MCF 10A (cell line): ENCODE measurements at regions of chr2 and their contacts with region 1.

Region 1: DNA sequence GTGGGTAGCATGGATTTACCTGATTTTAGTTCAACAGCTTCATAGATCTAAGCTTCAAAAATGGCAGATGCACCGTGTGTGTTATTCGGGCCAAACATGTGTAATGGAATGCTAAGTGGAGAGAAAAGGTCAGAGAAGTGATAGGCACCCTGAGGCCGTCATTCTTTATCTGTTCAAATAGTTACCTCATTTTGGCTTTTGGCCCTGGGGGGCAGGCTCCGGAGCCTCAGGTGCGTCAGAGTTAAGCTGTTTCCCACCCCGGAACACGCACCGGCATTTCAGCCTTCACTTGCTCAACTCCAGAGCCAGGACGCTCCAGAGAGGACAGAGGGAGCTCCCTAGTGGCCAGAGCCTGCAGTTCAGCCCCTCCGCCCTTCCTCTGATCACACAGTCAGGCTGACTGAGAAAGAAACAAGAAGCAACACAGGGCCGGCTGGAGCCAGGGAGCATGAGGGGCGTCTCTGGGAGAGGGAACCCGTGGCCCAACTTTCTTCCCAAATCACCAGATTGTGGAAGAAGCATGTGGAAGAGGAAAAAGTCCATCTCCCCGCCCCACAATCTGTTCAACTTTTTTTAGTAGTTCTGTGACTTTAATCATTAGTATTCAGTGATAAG is 135.2 kb upstream of the EPC2 start:
- DNase-seq: peak; percentile 88
- H3K4me3 Mint-ChIP-seq: peak overlapping the region; percentile 67
- H3K27ac Mint-ChIP-seq: peak overlapping the region; percentile 36
- H3K4me1 Mint-ChIP-seq: peaks cover 8% of the 10 kb centered on the region
- H3K27me3 Mint-ChIP-seq: no peaks in the 10 kb centered on the region
- CTCF ChIP-seq: peak; percentile 93

Region 2: DNA sequence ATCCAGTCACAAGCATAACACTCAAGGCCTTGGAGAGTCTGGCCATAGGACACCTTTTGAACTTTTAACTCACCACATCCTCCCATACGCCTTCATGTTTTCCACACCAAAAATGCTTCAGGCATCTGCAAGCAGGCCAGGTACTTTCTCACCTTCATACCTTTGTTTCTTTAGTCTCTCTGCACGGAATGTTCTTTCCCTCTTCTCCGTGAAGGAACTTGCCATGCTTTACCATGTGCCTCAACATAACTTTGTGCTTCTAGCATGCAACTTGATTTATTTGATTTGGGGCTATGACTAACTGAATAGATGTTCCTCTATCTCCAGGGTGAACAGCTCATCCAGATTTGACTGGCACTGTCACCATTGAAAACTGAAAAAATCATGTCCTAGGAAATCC is 806.2 kb before region 1 on chr2:
- CTCF ChIA-PET with region 1: no interaction called
- POLR2A ChIA-PET with region 1: no interaction called
- intact Hi-C with region 1: no loop called
- DNase-seq: no peak
- H3K4me3 Mint-ChIP-seq: no peak overlapping the region
- H3K27ac Mint-ChIP-seq: no peak overlapping the region
- H3K4me1 Mint-ChIP-seq: no peaks in the 10 kb centered on the region
- H3K27me3 Mint-ChIP-seq: no peaks in the 10 kb centered on the region
- CTCF ChIP-seq: no peak

Region 3: DNA sequence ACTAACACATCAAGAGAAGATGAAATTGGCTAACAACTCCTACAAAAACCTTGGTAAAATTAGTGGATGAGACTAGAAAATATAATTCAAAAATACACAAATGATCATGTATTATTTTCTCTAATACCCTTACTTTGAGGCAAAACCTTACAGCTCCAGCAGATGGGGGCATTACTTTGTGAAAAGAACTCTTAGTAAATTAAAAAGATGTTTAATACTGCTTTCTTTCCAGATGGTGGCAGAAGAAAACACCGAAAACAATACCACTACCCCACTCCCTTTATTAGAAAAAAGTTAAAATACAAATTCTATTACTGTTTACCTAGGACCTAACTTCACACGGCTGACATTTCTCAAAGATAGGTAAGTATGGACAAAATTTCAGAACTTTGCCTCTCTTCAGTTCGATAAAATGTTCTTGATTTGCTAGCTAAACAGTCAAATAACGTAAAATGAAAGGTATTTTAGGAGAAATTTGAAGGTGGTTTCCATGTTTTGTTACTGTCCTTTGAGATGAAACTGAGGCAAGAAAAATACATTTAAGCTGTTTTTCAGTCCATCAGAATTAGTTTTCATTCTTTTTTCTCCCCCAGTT is 519.5 kb before region 1 on chr2:
- CTCF ChIA-PET with region 1: interaction called, 19 read pairs
- POLR2A ChIA-PET with region 1: no interaction called
- intact Hi-C with region 1: loop called (anchors 1 kb)
- DNase-seq: peak; percentile 50
- H3K4me3 Mint-ChIP-seq: no peak overlapping the region
- H3K27ac Mint-ChIP-seq: no peak overlapping the region
- H3K4me1 Mint-ChIP-seq: no peaks in the 10 kb centered on the region
- H3K27me3 Mint-ChIP-seq: no peaks in the 10 kb centered on the region
- CTCF ChIP-seq: peak; percentile 72

Region 4: GRCh38 chr2:148209603-148210002 is 299.8 kb before region 1 on chr2:
- CTCF ChIA-PET with region 1: no interaction called
- POLR2A ChIA-PET with region 1: no interaction called
- intact Hi-C with region 1: loop called (anchors 10 kb)
- DNase-seq: no peak
- H3K4me3 Mint-ChIP-seq: no peak overlapping the region
- H3K27ac Mint-ChIP-seq: no peak overlapping the region
- H3K4me1 Mint-ChIP-seq: no peaks in the 10 kb centered on the region
- H3K27me3 Mint-ChIP-seq: no peaks in the 10 kb centered on the region
- CTCF ChIP-seq: no peak

Region 5: DNA sequence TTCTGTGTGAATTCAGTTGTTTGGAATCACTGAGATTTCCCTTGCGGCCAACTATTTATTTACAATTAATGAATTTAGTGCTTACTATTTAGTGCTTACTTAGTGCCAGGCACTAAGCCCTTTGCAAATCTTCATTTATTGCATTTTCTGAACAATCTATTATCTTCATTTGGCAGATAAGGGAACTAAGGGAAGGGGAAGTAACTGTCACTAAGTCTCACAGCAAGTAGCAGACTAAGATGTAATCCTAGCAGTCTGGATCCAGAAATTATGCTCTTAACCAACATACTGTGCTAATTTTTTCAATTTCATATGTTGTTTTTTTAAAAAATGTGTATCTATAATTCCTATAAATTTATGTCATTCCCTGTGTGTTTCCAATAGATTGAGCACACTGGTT is 79.3 kb before region 1 on chr2:
- CTCF ChIA-PET with region 1: no interaction called
- POLR2A ChIA-PET with region 1: no interaction called
- intact Hi-C with region 1: no loop called
- DNase-seq: no peak
- H3K4me3 Mint-ChIP-seq: no peak overlapping the region
- H3K27ac Mint-ChIP-seq: no peak overlapping the region
- H3K4me1 Mint-ChIP-seq: no peaks in the 10 kb centered on the region
- H3K27me3 Mint-ChIP-seq: no peaks in the 10 kb centered on the region
- CTCF ChIP-seq: no peak

Region 6: DNA sequence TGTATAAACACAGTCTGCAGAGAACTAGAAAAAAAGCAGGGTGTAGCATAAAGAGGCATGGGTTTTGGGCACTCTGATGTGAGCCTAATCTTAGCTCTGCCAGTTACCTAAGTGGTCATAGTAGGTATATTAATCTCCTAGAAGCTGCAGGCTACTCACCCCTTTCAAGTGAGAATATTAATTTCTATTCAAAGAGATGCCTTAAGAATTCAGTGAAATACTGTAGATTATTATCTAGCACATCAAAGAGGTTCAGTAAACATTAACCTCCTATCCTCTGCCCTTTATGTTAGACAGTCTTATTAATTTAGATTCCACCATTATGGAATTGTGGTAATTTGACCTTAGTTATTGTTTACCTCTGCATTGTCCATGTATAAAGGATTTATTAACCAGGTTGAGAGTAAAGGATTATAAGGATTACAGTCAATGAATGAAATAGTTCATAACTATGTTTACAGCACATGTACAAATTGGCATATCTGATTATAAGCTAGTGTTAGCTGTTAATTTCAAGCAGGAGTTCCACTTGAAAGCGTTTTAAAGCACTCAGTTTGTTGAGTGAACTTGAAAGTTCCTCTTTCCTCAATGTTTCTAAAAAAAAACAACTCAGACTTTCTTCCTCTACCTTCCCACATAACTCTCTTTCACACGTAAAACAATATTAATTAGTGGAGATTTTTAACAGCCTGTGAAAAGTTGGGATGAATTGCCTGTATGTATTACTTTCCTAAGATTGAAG is 15.4 kb before region 1 on chr2:
- CTCF ChIA-PET with region 1: interaction called, 11 read pairs
- POLR2A ChIA-PET with region 1: interaction called, 3 read pairs
- intact Hi-C with region 1: no loop called
- DNase-seq: no peak
- H3K4me3 Mint-ChIP-seq: no peak overlapping the region
- H3K27ac Mint-ChIP-seq: no peak overlapping the region
- H3K4me1 Mint-ChIP-seq: no peaks in the 10 kb centered on the region
- H3K27me3 Mint-ChIP-seq: no peaks in the 10 kb centered on the region
- CTCF ChIP-seq: no peak

Region 7: DNA sequence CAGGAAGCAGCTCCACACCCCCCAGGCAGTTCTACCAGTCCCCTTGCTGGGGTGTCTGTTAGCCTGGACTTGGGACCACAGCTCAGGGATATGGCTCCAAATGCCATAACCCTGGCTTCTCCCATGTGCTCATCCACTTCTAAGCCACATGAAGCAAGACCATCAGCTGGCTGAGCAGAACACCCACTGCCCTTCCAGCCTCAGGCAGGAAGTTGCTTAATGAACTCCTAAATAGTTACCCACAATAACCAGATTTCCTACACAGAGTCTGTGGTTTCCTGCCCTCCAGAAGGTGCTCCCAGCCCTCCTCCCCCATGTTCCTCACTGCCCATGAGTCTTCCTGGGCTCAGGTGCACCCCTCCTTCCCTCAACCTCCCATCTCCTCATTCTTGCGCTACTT is 36.9 kb after region 1 on chr2:
- CTCF ChIA-PET with region 1: no interaction called
- POLR2A ChIA-PET with region 1: no interaction called
- intact Hi-C with region 1: no loop called
- DNase-seq: peak; percentile 34
- H3K4me3 Mint-ChIP-seq: no peak overlapping the region
- H3K27ac Mint-ChIP-seq: no peak overlapping the region
- H3K4me1 Mint-ChIP-seq: no peaks in the 10 kb centered on the region
- H3K27me3 Mint-ChIP-seq: no peaks in the 10 kb centered on the region
- CTCF ChIP-seq: no peak

Region 8: DNA sequence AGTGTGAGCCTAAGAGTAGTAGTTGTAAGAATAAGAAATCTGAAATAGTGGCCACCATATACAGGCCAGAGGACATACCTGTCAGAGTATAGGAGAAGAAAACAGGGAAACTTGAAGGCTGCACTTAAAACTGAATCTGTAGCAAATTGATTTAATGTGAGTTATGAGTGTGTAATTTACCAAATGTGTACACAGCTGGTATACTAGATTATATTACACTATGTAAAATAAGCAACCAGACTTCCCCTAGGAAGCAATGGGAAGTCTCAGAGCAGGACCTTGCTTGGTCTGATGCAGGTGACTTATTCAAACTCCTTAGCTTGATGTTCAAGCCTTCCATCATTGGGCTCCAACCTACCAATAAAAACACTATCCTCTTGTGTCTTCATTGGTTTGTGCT is 117.8 kb after region 1 on chr2:
- CTCF ChIA-PET with region 1: no interaction called
- POLR2A ChIA-PET with region 1: no interaction called
- intact Hi-C with region 1: no loop called
- DNase-seq: no peak
- H3K4me3 Mint-ChIP-seq: no peak overlapping the region
- H3K27ac Mint-ChIP-seq: no peak overlapping the region
- H3K4me1 Mint-ChIP-seq: peaks cover 9% of the 10 kb centered on the region
- H3K27me3 Mint-ChIP-seq: no peaks in the 10 kb centered on the region
- CTCF ChIP-seq: no peak

Region 9: DNA sequence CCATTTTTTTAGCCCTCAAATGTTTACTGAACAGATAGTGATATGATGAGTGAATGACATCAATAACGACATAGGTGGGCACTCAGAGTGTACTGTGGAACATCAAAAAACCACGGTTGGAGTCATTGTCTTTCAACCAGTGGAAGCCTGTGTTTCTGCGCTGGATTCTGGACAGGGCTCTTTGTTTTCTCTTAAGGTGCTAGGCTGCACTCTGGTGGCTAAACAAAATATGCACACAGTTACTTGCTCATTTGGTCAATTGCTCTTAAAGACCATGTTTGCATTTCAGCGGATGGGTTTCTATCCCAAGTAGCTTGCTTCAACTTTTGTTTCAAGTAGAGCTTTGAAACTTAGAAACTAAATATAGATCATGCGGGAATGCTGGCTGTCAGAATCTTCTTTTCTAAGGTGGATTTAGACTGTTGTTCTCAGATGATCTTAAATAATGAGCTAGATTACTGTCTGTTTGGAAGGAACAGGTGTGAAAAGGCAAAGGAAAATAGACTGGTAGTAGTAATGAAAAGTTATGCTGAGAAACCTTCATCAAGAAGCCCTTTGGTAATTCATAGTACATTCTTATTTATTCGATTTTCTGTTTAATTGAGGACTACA is 480.6 kb after region 1 on chr2:
- CTCF ChIA-PET with region 1: interaction called, 7 read pairs
- POLR2A ChIA-PET with region 1: no interaction called
- intact Hi-C with region 1: loop called (anchors 1 kb)
- DNase-seq: peak; percentile 80
- H3K4me3 Mint-ChIP-seq: no peak overlapping the region
- H3K27ac Mint-ChIP-seq: no peak overlapping the region
- H3K4me1 Mint-ChIP-seq: no peaks in the 10 kb centered on the region
- H3K27me3 Mint-ChIP-seq: no peaks in the 10 kb centered on the region
- CTCF ChIP-seq: peak; percentile 83